KBM-7 (cell line): ENCODE measurements at regions of chr10 and their contacts with region 1.

Region 1: GRCh38 chr10:100046021-100046486 is 35.6 kb downstream of the CPN1 start:
- DNase-seq: peak; percentile 83

Region 2: DNA sequence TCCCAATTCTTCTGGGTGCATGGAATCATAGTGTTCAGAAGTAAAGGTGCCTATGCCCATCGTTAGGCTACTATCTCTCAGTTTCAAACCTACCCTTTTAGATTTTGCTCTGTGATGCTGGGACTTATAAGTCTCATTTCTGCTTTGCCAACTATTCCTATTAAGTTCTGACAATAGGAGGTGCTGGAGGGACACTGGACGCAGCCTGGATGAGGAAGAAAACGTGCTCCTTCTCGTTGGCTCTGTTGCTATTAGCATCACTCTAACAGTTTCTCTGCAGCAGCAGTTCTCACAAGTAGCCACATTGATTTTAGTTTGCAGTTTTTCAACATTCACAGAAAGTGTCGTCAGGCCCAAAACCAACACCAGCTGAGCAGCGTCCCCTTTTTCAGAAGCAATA is 191.2 kb before region 1 on chr10:
- in situ Hi-C with region 1: loop called (anchors 25 kb)
- DNase-seq: peak; percentile 58

Region 3: DNA sequence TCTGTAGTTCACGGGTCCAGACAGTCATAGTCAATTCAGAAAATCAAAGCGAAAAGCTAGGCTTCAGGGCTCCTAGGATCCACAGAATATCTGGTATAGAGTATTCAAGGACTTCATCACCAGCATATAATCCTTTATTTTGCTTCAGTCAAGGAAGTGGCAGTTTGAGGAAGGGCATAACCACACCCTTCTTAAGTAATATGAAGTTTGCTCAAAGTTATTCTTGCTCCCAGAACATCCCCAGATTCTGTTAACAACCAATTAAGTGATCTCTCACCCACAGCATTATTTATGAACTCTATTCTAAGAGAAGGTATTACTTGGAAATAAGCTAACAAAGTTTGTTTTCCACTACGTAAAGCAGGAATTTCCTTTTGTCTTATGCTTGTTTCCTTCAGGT is 208.1 kb after region 1 on chr10:
- in situ Hi-C with region 1: no loop called
- DNase-seq: no peak

Region 4: GRCh38 chr10:101569838-101570766 is 1524.0 kb after region 1 on chr10:
- in situ Hi-C with region 1: no loop called
- DNase-seq: peak; percentile 82